ENCODE measurements at regions of chr6 and their contacts with region 1.

Region 1: DNA sequence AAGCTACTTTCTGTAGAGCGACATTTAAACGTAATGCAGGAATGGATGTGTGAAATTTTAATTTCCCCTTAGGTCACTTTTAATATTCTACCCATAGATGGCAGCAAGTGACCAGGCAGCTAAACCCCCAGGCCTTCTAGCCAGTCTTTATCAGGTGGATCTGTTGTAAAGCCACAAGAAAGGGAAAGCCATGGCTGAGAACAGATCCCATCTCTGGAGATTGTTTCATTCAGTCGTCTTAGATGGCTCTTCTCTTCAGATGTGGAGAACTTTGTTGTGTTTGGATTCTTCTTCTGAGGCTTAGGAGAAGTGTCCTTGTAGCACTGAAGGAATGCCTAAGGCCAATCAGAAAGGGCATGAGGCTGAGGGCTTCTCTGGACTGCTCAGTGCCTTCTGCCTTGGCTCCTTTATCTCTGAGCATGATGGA is 15.8 kb upstream of the RNF182 start:
- DNase-seq: peak; percentile 58 to 64
- ATAC-seq: peak; percentile 80 to 83
- H3K4me3 ChIP-seq: no peak overlapping the region
- H3K27ac ChIP-seq: no peak overlapping the region
- H3K4me1 ChIP-seq: peaks cover 6% of the 10 kb centered on the region; the same call in 1 of the 3 replicates
- CTCF ChIP-seq: peak; percentile 82
- EP300 ChIP-seq: no peak
- POLR2A ChIP-seq: no peak
- RAD21 ChIP-seq: peak; percentile 90

Region 2: GRCh38 chr6:13859871-13860555 is 49.0 kb before region 1 on chr6:
- CTCF ChIA-PET with region 1: no interaction called
- POLR2A ChIA-PET with region 1: no interaction called
- DNase-seq: no peak
- ATAC-seq: no peak
- H3K4me3 ChIP-seq: no peak overlapping the region
- H3K27ac ChIP-seq: no peak overlapping the region
- H3K4me1 ChIP-seq: peaks cover 5% of the 10 kb centered on the region; the same call in 1 of the 3 replicates
- CTCF ChIP-seq: no peak
- EP300 ChIP-seq: no peak
- POLR2A ChIP-seq: no peak
- RAD21 ChIP-seq: no peak

Region 3: GRCh38 chr6:13892007-13892645 is 16.8 kb before region 1 on chr6:
- CTCF ChIA-PET with region 1: interaction called, 17 read pairs
- POLR2A ChIA-PET with region 1: no interaction called
- DNase-seq: no peak
- ATAC-seq: no peak
- H3K4me3 ChIP-seq: no peak overlapping the region
- H3K27ac ChIP-seq: no peak overlapping the region
- H3K4me1 ChIP-seq: no peaks in the 10 kb centered on the region
- CTCF ChIP-seq: no peak
- EP300 ChIP-seq: no peak
- POLR2A ChIP-seq: no peak
- RAD21 ChIP-seq: no peak

Region 4: GRCh38 chr6:13935190-13935880 is 26.4 kb after region 1 on chr6:
- CTCF ChIA-PET with region 1: no interaction called
- POLR2A ChIA-PET with region 1: no interaction called
- DNase-seq: no peak
- ATAC-seq: no peak
- H3K4me3 ChIP-seq: no peak overlapping the region
- H3K27ac ChIP-seq: no peak overlapping the region
- H3K4me1 ChIP-seq: no peaks in the 10 kb centered on the region
- CTCF ChIP-seq: no peak
- EP300 ChIP-seq: no peak
- POLR2A ChIP-seq: no peak
- RAD21 ChIP-seq: no peak

Region 5: DNA sequence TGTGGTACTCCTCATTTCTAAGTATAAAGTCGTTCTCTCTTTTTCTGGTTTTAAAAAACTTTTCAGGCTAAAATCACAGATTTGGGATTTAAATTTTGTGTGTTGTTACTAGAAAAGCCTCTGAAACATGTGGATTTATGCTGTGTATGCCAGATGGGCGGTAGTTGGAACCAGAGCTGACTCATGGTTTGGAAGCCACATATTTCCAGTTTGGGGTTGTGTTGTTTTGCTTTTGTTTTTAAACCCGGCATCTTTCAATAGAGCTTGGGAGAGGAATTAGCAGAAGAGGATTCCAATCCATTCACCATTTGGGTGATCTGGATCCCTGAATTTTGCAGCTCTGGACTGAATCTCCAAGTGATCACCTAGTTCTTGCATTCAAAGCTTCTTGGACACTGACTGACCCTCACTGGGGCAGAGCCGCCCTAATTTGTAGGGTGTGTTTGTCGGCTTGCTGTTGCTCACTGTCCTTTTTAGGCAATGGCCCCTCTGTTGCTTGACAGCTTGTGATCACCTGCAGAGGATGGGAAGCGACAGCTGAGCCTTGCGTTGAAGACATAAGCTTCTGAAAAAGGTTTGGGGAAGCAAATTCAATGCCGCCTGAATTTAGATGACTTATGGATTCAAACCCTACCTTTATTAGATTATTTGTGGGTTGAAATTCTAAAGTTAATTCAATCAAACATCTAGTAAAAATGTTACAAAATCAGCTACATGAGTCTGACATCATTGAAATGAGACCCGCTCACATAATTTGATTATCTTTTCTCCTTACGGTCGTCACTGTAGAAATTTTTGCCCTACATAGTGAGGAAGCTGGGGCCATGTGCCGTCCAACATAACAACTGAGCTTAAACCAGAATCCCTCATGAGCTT is 128.7 kb after region 1 on chr6:
- CTCF ChIA-PET with region 1: interaction called, 18 read pairs
- POLR2A ChIA-PET with region 1: no interaction called
- DNase-seq: no peak
- ATAC-seq: no peak
- H3K4me3 ChIP-seq: no peak overlapping the region
- H3K27ac ChIP-seq: no peak overlapping the region
- H3K4me1 ChIP-seq: 0 out of 3 replicates have a peak, but pooled peaks cover 6% of the 10 kb centered on the region
- CTCF ChIP-seq: no peak
- EP300 ChIP-seq: no peak
- POLR2A ChIP-seq: no peak
- RAD21 ChIP-seq: no peak

Region 6: DNA sequence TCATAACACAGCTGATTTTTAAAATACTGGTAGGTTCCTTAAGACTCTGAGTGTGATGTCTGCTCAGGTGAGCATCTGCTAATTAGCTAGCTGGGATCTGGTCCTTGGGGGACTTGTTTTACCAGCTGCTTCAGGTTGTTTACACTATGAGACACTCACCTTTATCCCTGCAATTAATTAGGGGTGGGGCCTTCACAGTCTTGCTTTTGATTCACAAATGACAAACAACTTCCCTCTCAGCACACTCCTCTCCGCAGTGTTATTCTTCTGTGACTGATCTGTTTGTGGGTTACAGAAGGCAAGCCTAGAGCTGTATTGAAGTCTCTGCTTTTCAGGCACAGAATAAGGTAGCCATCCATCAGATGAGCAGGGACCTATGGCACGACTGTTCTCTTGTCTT is 146.6 kb after region 1 on chr6:
- CTCF ChIA-PET with region 1: interaction called, 14 read pairs
- POLR2A ChIA-PET with region 1: no interaction called
- DNase-seq: no peak
- ATAC-seq: no peak
- H3K4me3 ChIP-seq: no peak overlapping the region
- H3K27ac ChIP-seq: no peak overlapping the region
- H3K4me1 ChIP-seq: peaks cover 11% of the 10 kb centered on the region
- CTCF ChIP-seq: no peak
- EP300 ChIP-seq: no peak
- POLR2A ChIP-seq: no peak
- RAD21 ChIP-seq: no peak

Region 7: DNA sequence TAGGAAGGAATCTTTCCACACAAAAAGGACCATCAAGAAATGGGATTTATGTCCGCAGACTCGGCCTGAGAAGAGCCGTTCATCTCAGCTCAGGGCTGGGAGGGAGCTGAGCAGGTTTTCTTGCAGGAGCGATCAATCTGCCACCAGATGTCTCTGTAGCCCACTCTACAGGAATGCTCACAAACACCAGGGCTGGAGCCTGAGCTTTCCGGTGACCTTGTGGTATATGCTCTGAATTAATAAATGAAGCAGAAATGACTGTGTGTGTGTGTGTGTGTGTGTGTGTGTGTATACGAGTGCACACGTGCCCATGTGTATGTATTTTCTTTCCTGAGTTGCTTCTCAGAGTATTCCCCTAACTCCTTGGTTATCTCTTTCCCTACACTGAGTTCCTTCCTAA is 220.6 kb after region 1 on chr6:
- CTCF ChIA-PET with region 1: interaction called, 10 read pairs
- POLR2A ChIA-PET with region 1: no interaction called
- DNase-seq: peak; percentile 51 to 58
- ATAC-seq: peak; percentile 90 to 96
- H3K4me3 ChIP-seq: no peak overlapping the region
- H3K27ac ChIP-seq: 0 out of 6 replicates have a peak overlapping the region, but pooled peaks of 1 of the 2 experiments have one; percentile 6
- H3K4me1 ChIP-seq: no peaks in the 10 kb centered on the region
- CTCF ChIP-seq: peak; percentile 58
- EP300 ChIP-seq: no peak
- POLR2A ChIP-seq: no peak
- RAD21 ChIP-seq: peak; percentile 71 to 78

Region 8: DNA sequence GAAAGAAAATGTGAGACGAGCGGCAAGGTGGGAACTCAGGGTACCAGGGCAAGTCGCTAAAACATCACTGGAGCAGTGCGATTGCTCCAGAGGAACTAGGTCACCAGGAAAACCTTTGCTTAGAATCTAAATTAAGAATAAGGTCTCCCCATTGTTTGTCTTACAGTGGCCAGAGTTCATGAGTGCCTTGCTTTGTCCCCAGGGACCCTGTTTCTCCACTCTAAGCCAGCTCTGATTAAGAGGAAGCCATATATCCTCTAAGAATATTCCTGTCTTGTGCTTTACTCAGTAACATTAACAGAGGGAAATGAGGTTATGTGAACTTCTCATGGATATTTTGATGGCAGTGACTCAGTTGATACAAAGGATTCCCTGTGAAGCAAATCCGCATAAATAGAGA is 514.4 kb after region 1 on chr6:
- CTCF ChIA-PET with region 1: no interaction called
- POLR2A ChIA-PET with region 1: no interaction called
- DNase-seq: no peak
- ATAC-seq: no peak
- H3K4me3 ChIP-seq: no peak overlapping the region
- H3K27ac ChIP-seq: no peak overlapping the region
- H3K4me1 ChIP-seq: no peaks in the 10 kb centered on the region
- CTCF ChIP-seq: no peak
- EP300 ChIP-seq: no peak
- POLR2A ChIP-seq: no peak
- RAD21 ChIP-seq: no peak